Heart right ventricle (tissue), 16 donors: ENCODE measurements at regions of chr1 and their contacts with region 1.

Region 1: DNA sequence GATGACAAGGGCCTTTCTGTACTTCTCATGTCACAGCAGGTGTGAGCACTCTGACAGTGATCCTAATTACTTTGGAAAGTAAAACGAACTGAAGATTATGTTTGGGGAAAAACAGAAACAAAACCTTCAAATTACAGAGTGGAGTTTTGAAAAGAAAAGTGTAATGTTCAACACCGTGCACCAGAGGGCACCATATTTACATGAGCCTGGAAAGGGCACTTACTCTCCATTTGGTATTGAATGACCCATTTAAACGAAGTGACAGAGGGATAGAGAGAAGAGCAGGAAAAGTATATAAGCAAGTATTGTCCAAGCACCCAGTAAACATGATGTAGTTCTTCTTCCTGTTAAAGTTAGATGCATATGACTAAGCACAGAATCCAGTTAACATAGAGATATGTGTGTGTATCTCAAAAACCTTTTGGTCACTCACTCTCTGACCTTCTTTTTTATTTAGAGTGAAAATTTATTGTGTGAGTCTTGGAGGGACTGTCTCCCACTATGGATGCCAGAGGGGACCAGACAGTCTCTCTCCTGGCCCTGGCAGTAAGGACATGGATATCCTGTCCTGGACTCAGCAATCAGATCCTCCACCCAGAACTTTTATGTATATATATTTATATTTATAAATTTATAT is 3.8 kb upstream of the RGSL1 start:
- DNase-seq: peak in 1 of 2 donors; percentile 7
- ATAC-seq: peak in 1 of 8 donors; percentile 48
- H3K4me3 ChIP-seq: no peak overlapping the region
- H3K27ac ChIP-seq: no peak overlapping the region
- H3K4me1 ChIP-seq: peaks cover 0 to 3% (median 0%) of the 10 kb centered on the region in 9 donors
- H3K27me3 ChIP-seq: no peaks in the 10 kb centered on the region
- CTCF ChIP-seq: peak; percentile 13 to 78 (median 64)

Region 2: GRCh38 chr1:182515556-182515955 is 69.4 kb after region 1 on chr1:
- intact Hi-C with region 1: no loop called
- DNase-seq: no peak
- ATAC-seq: no peak
- H3K4me3 ChIP-seq: no peak overlapping the region
- H3K27ac ChIP-seq: no peak overlapping the region
- H3K4me1 ChIP-seq: no peaks in the 10 kb centered on the region
- H3K27me3 ChIP-seq: no peaks in the 10 kb centered on the region
- CTCF ChIP-seq: no peak

Region 3: DNA sequence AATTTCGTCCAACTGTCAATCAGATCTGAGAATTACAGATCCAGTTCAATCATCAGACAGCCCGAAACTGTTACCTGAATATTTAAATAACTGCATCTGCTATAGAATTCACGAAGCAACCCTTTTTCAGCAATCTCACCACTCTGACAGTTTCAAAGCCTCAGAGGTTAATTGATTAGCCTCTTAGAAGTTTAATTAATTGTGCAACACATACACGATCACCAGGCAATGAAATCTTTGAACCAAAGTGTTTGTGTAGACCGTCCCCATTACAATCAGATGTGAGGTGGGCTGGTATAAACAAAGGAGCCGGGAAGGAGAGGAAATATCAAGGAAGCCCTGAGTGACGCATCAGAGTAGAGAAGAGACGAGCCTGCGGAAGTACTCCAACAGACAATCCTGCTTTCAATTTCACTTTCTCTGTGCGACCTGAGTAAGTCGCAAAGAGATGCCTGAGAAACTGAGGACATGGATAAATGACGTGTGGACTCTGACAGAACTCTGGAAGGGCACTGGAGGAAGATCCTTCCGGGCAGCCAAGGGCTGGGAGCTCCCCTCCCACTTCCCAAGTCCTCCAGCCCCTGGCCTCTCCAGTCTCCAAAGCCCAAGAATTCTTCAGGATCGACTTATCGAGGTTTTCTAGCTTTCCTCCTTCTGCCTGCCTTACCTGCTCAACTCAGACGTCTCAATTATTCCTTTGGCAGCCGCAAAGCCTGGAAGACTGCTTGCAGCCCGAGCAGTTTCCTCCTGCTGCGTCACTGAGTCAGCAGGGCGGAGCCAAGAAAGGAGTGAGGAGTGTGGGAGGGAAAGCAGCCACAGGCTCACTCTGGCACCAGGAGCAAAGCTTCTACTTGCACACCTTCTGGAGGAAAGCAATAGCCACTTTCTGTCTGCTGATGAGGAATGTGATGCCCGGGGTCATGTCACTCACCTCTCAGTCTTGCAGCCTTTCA is 142.6 kb after region 1 on chr1 and contains the start of gene RNASEL:
- intact Hi-C with region 1: loop called in 5 of 10 experiments (anchors 5 to 10 kb)
- DNase-seq: peak; percentile 68 to 71
- ATAC-seq: peak; percentile 88 to 95 (median 94)
- H3K4me3 ChIP-seq: peak within 1 kb of the TSS; percentile 51 to 84 (median 68)
- H3K27ac ChIP-seq: peak within 1 kb of the TSS; percentile 68 to 99 (median 88)
- H3K4me1 ChIP-seq: peaks cover 4 to 46% (median 22%) of the 10 kb centered on the region in 9 donors
- H3K27me3 ChIP-seq: no peaks in the 10 kb centered on the region
- CTCF ChIP-seq: no peak
- total RNA-seq, gene RNASEL: 1.5 to 4.7 (median 3.5) TPM

Region 4: GRCh38 chr1:182595641-182596240 is 149.6 kb after region 1 on chr1:
- intact Hi-C with region 1: loop called in 6 of 10 experiments (anchors 5 to 10 kb)
- DNase-seq: peak; percentile 48 to 72
- ATAC-seq: peak; percentile 54 to 77 (median 72)
- H3K4me3 ChIP-seq: no peak overlapping the region
- H3K27ac ChIP-seq: no peak overlapping the region
- H3K4me1 ChIP-seq: peaks cover 0 to 41% (median 7%) of the 10 kb centered on the region in 9 donors
- H3K27me3 ChIP-seq: no peaks in the 10 kb centered on the region
- CTCF ChIP-seq: peak; percentile 63 to 92 (median 90)

Region 5: GRCh38 chr1:182604169-182605164 is 158.3 kb after region 1 on chr1 and contains the start of gene RGS16:
- intact Hi-C with region 1: loop called in 6 of 10 experiments (anchors 5 to 10 kb)
- DNase-seq: peak; percentile 95 to 96
- ATAC-seq: peak; percentile 96 to 98 (median 97)
- H3K4me3 ChIP-seq: peak within 1 kb of the TSS; percentile 42 to 71 (median 60)
- H3K27ac ChIP-seq: peak within 1 kb of the TSS in 9 of 10 donors; percentile 15 to 75 (median 58)
- H3K4me1 ChIP-seq: peaks cover 7 to 70% (median 31%) of the 10 kb centered on the region in 9 donors
- H3K27me3 ChIP-seq: peaks cover 0 to 17% (median 0%) of the 10 kb centered on the region in 7 donors
- CTCF ChIP-seq: no peak
- total RNA-seq, gene RGS16: 0.42 to 8.7 (median 2.1) TPM

Region 6: DNA sequence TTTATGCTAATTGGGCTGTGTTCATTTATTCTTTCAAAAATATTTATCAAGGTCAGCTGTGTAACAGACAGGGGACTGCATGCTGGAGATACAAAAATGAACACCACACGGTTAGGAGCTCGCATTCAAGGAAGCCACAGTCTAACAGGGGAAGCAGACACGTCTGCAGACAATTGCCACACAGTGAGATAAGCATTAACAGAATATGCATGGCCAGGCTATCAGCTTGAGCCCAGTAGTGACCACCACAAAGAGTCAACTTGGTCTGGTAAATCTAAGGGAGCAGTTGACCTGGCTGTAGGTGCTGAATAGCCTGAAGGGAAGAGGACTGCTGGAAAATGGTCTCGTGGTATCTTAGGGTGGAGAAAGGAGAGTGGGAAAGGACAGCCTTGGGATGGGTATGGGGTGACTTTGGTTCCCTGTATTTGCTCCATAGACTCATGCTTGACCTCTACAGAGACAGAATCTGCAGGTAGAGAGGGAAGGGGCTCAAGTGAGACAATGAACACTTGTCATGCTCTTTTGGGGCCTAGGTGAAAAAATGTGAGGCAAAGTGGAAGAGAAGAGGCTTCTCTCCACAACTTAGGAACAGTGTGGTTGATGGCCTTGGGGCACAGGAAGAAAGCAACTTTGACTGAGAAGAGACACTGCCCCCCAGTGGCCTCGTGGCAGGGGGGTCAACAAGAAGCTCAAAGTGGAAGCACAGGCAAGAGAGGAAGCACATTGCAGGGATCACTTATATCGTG is 335.9 kb after region 1 on chr1:
- intact Hi-C with region 1: loop called in 7 of 10 experiments (anchors 5 to 10 kb)
- DNase-seq: peak; percentile 69 to 79
- ATAC-seq: peak; percentile 72 to 86 (median 84)
- H3K4me3 ChIP-seq: no peak overlapping the region
- H3K27ac ChIP-seq: no peak overlapping the region
- H3K4me1 ChIP-seq: peaks cover 0 to 24% (median 3%) of the 10 kb centered on the region in 9 donors
- H3K27me3 ChIP-seq: no peaks in the 10 kb centered on the region
- CTCF ChIP-seq: peak; percentile 50 to 88 (median 83)